ENCODE measurements at regions of chr5 and their contacts with region 1.

Region 1: DNA sequence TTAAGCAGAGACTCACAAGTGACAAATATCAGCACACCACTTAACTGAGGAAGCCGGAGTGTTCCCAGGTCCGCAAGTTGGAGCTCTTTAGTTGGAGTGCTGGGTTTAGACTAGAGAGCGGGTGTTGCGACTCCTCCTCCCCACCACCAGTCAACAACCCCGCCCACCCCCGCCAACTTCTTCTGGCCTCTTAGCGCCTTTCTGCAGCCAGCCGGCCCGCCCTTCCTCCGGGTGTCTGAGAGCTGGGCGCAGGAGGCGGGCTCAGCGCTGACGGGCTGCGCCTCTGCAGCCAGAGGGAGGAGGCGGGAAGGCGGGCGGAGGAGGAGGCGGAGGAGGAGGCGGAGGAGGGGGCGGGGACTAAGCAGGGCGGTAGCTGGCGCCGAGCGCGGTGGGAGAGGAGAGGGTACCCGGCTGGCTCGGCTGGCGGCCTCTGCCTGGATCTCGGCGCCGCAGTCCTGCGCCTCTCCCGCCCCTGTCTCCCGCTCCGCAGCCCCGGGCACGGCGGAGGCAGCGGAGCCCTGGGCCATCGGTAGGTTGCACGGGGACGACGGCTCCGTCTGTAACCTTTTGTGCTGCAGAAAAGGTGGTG is at the start of gene MACIR:
- DNase-seq: peak; percentile 96 to 97
- H3K4me3 ChIP-seq: peak within 1 kb of the TSS; percentile 89
- H3K4me3 Mint-ChIP-seq: peak within 1 kb of the TSS; percentile 81
- H3K27ac Mint-ChIP-seq: peak within 1 kb of the TSS; percentile 20
- H3K4me1 ChIP-seq: peaks cover 5% of the 10 kb centered on the region; the same call in 1 of the 2 replicates
- H3K4me1 Mint-ChIP-seq: peaks cover 19% of the 10 kb centered on the region
- H3K27me3 ChIP-seq: no peaks in the 10 kb centered on the region
- H3K27me3 Mint-ChIP-seq: peaks cover 4% of the 10 kb centered on the region
- CTCF ChIP-seq: peak in 1 of 2 experiments; percentile 1
- total RNA-seq, gene MACIR: 4.1 and 5.2 TPM in 2 replicates

Region 2: GRCh38 chr5:102792705-102793104 is 465.8 kb before region 1 on chr5:
- CTCF ChIA-PET with region 1: no interaction called
- POLR2A ChIA-PET with region 1: interaction called, 16 read pairs
- intact Hi-C with region 1: no loop called
- DNase-seq: no peak
- H3K4me3 ChIP-seq: no peak overlapping the region
- H3K4me3 Mint-ChIP-seq: no peak overlapping the region
- H3K27ac Mint-ChIP-seq: no peak overlapping the region
- H3K4me1 ChIP-seq: peaks cover 39% of the 10 kb centered on the region
- H3K4me1 Mint-ChIP-seq: peaks cover 14% of the 10 kb centered on the region
- H3K27me3 ChIP-seq: no peaks in the 10 kb centered on the region
- H3K27me3 Mint-ChIP-seq: no peaks in the 10 kb centered on the region
- CTCF ChIP-seq: peak; percentile 10 to 16

Region 3: GRCh38 chr5:103166706-103167105 is 91.8 kb before region 1 on chr5:
- CTCF ChIA-PET with region 1: no interaction called
- POLR2A ChIA-PET with region 1: no interaction called
- intact Hi-C with region 1: no loop called
- DNase-seq: no peak
- H3K4me3 ChIP-seq: no peak overlapping the region
- H3K4me3 Mint-ChIP-seq: no peak overlapping the region
- H3K27ac Mint-ChIP-seq: no peak overlapping the region
- H3K4me1 ChIP-seq: no peaks in the 10 kb centered on the region
- H3K4me1 Mint-ChIP-seq: no peaks in the 10 kb centered on the region
- H3K27me3 ChIP-seq: no peaks in the 10 kb centered on the region
- H3K27me3 Mint-ChIP-seq: no peaks in the 10 kb centered on the region
- CTCF ChIP-seq: no peak

Region 4: DNA sequence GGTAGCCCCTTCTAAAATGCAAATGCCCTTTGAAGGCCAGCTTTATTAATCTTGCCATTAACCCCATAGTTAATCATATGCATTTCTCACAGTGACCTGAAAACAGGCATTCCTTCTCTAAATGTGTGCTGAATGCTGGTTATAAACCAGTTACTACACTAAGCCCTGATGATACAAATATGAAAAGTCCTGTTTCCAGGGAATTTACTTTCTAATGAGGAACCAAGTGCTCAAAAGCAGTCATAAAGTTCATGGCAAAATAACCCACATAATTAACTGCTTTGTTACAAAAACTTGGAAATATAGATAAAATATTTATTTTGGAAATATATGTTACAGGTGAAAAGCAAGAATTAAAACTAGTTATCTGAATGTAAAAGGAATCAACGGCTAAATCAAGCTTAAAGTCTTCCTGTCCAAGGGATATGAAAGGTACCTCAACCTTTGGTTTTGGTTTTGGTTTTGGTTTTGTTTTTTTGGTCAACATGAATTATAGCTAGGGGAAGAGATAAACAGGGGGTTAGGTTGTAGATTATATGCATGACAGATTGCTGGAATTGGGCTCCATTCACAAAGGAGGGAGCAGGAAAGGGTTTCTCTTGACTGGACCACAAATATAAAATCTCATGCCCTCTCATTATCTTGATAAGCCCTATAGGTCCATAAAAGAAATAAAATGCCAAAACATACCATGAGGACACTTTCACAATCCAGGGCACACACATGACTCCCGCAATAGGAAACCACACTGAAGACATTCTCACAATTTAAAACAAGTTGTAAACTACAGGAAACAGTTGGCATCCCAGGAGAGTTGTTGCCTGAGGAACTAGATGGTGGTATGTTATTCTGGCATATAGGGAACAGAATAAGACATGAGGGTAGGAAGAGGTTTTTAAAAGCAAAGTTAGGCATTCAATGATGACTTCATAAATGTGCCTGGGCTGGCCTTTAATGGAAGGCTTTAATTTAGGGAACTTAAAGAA is 46.6 kb before region 1 on chr5:
- CTCF ChIA-PET with region 1: no interaction called
- POLR2A ChIA-PET with region 1: no interaction called
- intact Hi-C with region 1: no loop called
- DNase-seq: no peak
- H3K4me3 ChIP-seq: no peak overlapping the region
- H3K4me3 Mint-ChIP-seq: no peak overlapping the region
- H3K27ac Mint-ChIP-seq: no peak overlapping the region
- H3K4me1 ChIP-seq: no peaks in the 10 kb centered on the region
- H3K4me1 Mint-ChIP-seq: no peaks in the 10 kb centered on the region
- H3K27me3 ChIP-seq: no peaks in the 10 kb centered on the region
- H3K27me3 Mint-ChIP-seq: no peaks in the 10 kb centered on the region
- CTCF ChIP-seq: no peak

Region 5: GRCh38 chr5:103375863-103376844 is 117.7 kb after region 1 on chr5:
- CTCF ChIA-PET with region 1: interaction called, 4 read pairs
- POLR2A ChIA-PET with region 1: no interaction called
- intact Hi-C with region 1: loop called (anchors 2 kb)
- DNase-seq: peak; percentile 61 to 69
- H3K4me3 ChIP-seq: no peak overlapping the region
- H3K4me3 Mint-ChIP-seq: peak overlapping the region; percentile 42
- H3K27ac Mint-ChIP-seq: peak overlapping the region; percentile 23
- H3K4me1 ChIP-seq: peaks cover 34% of the 10 kb centered on the region
- H3K4me1 Mint-ChIP-seq: peaks cover 27% of the 10 kb centered on the region
- H3K27me3 ChIP-seq: no peaks in the 10 kb centered on the region
- H3K27me3 Mint-ChIP-seq: no peaks in the 10 kb centered on the region
- CTCF ChIP-seq: no peak

Region 6: DNA sequence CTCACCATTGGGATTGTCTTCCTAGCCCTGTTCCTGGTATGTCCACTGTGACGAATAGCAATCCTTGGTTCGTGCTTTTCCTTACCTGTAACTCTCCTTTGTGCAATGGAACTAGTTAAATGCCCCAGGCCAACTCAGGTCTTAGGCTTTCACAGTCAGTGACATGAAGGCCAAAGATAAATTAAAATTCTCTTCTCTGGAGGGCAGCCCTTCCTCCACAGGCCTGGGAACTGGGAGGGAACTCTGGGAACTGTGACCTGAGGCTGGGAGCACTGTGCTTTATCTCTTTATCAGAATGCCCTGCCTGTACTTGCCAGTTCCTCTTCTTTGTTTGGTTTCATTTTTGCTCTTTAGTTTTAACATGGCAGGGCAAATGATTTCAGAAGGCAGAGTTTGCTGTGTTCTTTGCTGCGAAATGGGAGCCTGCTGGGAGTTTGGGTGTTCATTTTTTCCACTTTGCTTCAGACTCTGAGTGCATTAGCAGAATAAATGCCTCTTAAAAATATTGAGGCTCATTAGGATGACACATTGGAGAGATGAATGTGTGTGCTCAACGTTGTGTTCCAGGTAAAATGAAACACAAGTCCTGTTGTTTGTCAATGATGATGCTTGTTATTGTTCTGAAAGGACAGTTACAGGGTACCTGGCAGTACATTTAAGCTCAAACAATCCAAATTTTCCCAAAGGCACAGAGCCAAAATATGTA is 186.0 kb after region 1 on chr5:
- CTCF ChIA-PET with region 1: interaction called, 3 read pairs
- POLR2A ChIA-PET with region 1: no interaction called
- intact Hi-C with region 1: loop called (anchors 5 kb)
- DNase-seq: peak; percentile 10 to 65
- H3K4me3 ChIP-seq: no peak overlapping the region
- H3K4me3 Mint-ChIP-seq: no peak overlapping the region
- H3K27ac Mint-ChIP-seq: peak overlapping the region; percentile 30
- H3K4me1 ChIP-seq: 0 out of 2 replicates have a peak, but pooled peaks cover 4% of the 10 kb centered on the region
- H3K4me1 Mint-ChIP-seq: peaks cover 6% of the 10 kb centered on the region
- H3K27me3 ChIP-seq: no peaks in the 10 kb centered on the region
- H3K27me3 Mint-ChIP-seq: no peaks in the 10 kb centered on the region
- CTCF ChIP-seq: no peak

Region 7: GRCh38 chr5:103475629-103476240 is 217.3 kb after region 1 on chr5:
- CTCF ChIA-PET with region 1: interaction called, 4 read pairs
- POLR2A ChIA-PET with region 1: no interaction called
- intact Hi-C with region 1: loop called (anchors 1 kb)
- DNase-seq: peak in 1 of 2 experiments; percentile 53
- H3K4me3 ChIP-seq: no peak overlapping the region
- H3K4me3 Mint-ChIP-seq: no peak overlapping the region
- H3K27ac Mint-ChIP-seq: no peak overlapping the region
- H3K4me1 ChIP-seq: peaks cover 8% of the 10 kb centered on the region; the same call in 1 of the 2 replicates
- H3K4me1 Mint-ChIP-seq: peaks cover 5% of the 10 kb centered on the region
- H3K27me3 ChIP-seq: no peaks in the 10 kb centered on the region
- H3K27me3 Mint-ChIP-seq: no peaks in the 10 kb centered on the region
- CTCF ChIP-seq: peak; percentile 51 to 65

Measured in Caco-2 (cell line).